HepG2 (cell line): ENCODE measurements at regions of chr1 and their contacts with region 1.

Region 1: DNA sequence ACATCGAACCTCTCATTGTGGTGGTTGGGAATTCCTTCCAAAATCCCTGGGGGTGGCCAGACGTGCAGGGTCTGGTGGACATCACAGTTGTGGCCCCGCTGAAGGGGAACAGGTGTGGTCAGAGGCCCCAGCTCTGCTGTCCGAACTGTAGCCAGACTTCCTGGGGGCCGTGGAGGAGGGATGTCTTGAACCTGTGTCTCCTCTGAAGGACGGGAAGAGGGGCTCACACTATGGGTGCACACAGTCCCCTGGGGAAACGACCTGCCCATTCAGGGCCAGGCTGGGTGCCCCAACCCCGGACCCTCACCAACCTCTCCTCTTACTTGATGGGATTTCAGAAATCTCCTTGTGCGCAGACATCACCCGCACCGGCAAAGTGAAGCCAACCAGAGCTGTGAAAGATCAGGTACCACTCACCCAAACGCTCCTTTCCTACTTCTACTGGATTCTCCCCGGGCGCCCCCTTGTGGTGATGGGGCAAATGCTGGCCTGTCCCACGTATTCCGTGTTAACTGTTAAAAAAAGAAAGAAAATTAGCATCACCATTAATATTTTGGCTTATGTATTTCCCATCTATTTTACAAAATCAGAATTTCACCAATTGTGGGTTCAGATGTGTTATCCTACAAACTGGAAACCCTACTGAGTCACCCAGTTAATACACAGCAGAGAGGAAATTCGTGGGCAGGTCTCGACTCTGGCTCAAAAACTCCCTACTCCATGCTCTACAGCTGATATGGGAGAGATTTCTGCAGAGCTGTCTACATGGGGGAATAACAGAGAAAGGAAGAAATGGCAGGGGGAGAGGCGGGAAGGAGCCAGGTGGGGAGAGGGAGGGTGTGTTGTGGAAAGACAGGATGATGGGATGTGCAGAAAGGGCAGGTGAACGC is 28.1 kb downstream of the PADI4 start:
- DNase-seq: peak; percentile 42
- ATAC-seq: peak; percentile 86
- H3K4me3 ChIP-seq: no peak overlapping the region
- H3K27ac ChIP-seq: no peak overlapping the region
- H3K4me1 ChIP-seq: no peaks in the 10 kb centered on the region
- H3K27me3 ChIP-seq: peaks cover 1 to 12% of the 10 kb centered on the region in 2 experiments
- CTCF ChIP-seq: peak; percentile 69
- EP300 ChIP-seq: no peak
- POLR2A ChIP-seq: no peak
- RAD21 ChIP-seq: no peak

Region 2: DNA sequence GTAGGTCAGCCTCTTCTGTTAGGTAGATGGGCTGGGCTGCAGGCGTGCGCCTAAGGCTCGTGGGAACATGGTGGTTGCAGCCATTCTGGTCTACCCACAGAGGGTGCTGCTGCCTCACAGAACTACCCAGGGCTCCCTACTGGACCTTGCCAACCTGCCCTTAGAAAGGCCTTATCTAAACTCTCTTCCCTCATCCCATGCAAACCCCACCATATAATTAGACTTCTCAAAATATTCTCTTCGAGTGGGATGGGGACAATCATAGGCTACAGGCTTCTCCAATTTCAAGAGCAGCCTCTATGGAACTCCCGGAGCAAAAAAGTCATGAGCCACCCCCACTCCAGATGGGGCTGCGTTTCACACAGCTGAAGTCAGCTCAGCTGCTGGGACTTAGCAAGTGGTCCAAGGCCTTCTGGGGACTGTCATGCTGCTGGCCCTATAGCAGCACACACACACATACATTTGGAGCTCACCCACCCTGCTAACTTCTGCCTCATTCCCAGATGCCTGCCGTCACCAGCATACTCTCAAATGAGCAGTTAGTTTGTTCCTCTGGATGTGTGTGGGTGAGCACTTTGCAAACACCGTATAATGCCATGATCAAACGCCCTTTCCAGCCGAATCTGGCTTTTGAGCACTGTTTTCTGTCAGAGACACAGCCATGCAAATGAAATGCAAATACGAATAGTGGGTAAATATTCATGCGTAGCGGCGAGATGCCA is 276.2 kb before region 1 on chr1:
- CTCF ChIA-PET with region 1: interaction called, 11 read pairs
- POLR2A ChIA-PET with region 1: no interaction called
- in situ Hi-C with region 1: no loop called
- intact Hi-C with region 1: no loop called
- DNase-seq: peak; percentile 55
- ATAC-seq: peak; percentile 98
- H3K4me3 ChIP-seq: no peak overlapping the region
- H3K27ac ChIP-seq: no peak overlapping the region
- H3K4me1 ChIP-seq: peaks cover 15% of the 10 kb centered on the region
- H3K27me3 ChIP-seq: 0 out of 5 replicates have a peak, but pooled peaks cover 0 to 1% of the 10 kb centered on the region in 2 experiments
- CTCF ChIP-seq: peak; percentile 88
- EP300 ChIP-seq: no peak
- POLR2A ChIP-seq: no peak
- RAD21 ChIP-seq: peak; percentile 80

Region 3: GRCh38 chr1:17119773-17120480 is 216.1 kb before region 1 on chr1:
- CTCF ChIA-PET with region 1: interaction called, 15 read pairs
- POLR2A ChIA-PET with region 1: no interaction called
- in situ Hi-C with region 1: loop called (anchors 5 kb)
- intact Hi-C with region 1: loop called (anchors 2 kb)
- DNase-seq: no peak
- ATAC-seq: no peak; the same call in 2 of the 3 replicates
- H3K4me3 ChIP-seq: no peak overlapping the region
- H3K27ac ChIP-seq: no peak overlapping the region
- H3K4me1 ChIP-seq: peaks cover 26% of the 10 kb centered on the region
- H3K27me3 ChIP-seq: peaks cover 2 to 11% of the 10 kb centered on the region in 2 experiments; a peak in 2 of 5 replicates
- CTCF ChIP-seq: no peak
- EP300 ChIP-seq: no peak
- POLR2A ChIP-seq: no peak
- RAD21 ChIP-seq: no peak

Region 4: GRCh38 chr1:17190010-17190995 is 145.8 kb before region 1 on chr1:
- CTCF ChIA-PET with region 1: no interaction called
- POLR2A ChIA-PET with region 1: no interaction called
- in situ Hi-C with region 1: no loop called
- intact Hi-C with region 1: no loop called
- DNase-seq: no peak
- ATAC-seq: no peak
- H3K4me3 ChIP-seq: no peak overlapping the region
- H3K27ac ChIP-seq: no peak overlapping the region
- H3K4me1 ChIP-seq: no peaks in the 10 kb centered on the region
- H3K27me3 ChIP-seq: peaks cover 0 to 4% of the 10 kb centered on the region in 2 experiments; a peak in 1 of 5 replicates
- CTCF ChIP-seq: no peak
- EP300 ChIP-seq: no peak
- POLR2A ChIP-seq: no peak
- RAD21 ChIP-seq: no peak

Region 5: DNA sequence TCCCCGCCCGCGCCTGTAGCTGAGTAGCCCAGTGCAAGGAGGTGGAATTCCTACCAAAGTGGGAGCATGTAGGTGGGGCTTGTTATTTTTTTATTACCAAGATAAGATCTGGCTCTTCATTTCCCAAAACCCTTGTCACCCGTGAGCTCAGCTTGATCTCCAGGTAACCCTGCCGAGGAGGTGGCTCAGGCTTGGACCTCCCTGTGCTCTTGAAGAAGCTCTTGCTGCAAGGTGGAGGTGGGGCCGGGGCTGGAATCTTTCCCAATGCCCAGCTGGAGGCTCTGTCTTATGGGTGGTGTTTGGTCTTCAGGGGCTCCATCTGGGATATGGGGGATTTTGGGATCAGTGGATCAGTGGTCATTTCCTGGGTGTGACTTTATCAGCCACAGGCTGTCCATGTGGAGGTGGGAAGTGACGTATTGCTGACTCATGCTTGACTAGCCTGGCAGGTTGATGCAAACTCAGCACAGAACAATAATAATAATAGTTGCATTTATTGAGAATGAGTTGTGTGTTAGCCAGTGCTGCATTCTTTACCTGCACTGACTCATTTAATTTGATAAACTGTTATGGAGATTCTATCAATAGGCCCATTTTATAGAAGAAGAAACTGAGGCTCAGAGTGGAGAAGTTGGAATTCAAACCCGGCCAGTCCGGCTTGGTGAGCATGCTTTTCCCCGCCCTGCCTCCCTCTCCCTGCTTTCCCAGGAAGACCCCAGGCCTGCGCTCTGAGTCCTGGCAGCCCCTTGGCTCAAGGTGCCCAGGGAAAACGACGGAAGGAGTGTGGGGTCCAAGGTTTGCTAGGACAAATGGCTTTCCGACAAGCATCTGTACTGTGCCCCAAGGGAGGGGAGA is 12.3 kb after region 1 on chr1:
- CTCF ChIA-PET with region 1: no interaction called
- POLR2A ChIA-PET with region 1: no interaction called
- in situ Hi-C with region 1: no loop called
- intact Hi-C with region 1: no loop called
- DNase-seq: no peak
- ATAC-seq: no peak
- H3K4me3 ChIP-seq: no peak overlapping the region
- H3K27ac ChIP-seq: no peak overlapping the region
- H3K4me1 ChIP-seq: no peaks in the 10 kb centered on the region
- H3K27me3 ChIP-seq: peaks cover 0 to 3% of the 10 kb centered on the region in 2 experiments; a peak in 2 of 5 replicates
- CTCF ChIP-seq: no peak
- EP300 ChIP-seq: no peak
- POLR2A ChIP-seq: no peak
- RAD21 ChIP-seq: no peak